Activated CD4-positive, alpha-beta memory T cell treated with anti-CD3 and anti-CD28 coated beads for 36 hours (primary cell): ENCODE measurements at regions of chr16 and their contacts with region 1.

Region 1: GRCh38 chr16:12754824-12755543 is 48.7 kb downstream of the CPPED1 start:
- DNase-seq: no peak
- H3K4me3 Mint-ChIP-seq: no peak overlapping the region
- H3K27ac Mint-ChIP-seq: no peak overlapping the region
- H3K4me1 Mint-ChIP-seq: peaks cover 33% of the 10 kb centered on the region
- H3K27me3 Mint-ChIP-seq: no peaks in the 10 kb centered on the region

Region 2: DNA sequence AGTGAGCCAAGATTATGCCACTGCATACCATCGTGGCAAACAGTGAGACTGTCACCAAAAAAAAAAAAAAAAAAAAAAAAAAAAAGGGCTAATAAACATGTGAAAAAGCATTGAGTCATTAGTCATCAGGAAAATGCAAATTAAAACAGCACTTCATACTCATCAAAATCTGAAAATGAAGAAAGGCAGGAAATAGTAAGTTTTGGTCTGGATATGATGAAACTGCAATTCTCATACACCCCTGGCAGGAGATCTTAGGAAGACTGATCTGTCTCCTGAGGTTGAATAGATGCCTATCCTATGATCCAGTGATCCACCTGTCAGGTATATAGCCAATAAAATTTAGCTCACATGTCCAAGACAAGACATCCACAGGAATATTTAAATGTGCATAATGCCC is 164.0 kb before region 1 on chr16:
- CTCF ChIA-PET with region 1: no interaction called
- POLR2A ChIA-PET with region 1: no interaction called
- intact Hi-C with region 1: loop called (anchors 1 kb)
- DNase-seq: no peak
- H3K4me3 Mint-ChIP-seq: no peak overlapping the region
- H3K27ac Mint-ChIP-seq: no peak overlapping the region
- H3K4me1 Mint-ChIP-seq: peaks cover 14% of the 10 kb centered on the region
- H3K27me3 Mint-ChIP-seq: peaks cover 17% of the 10 kb centered on the region

Region 3: GRCh38 chr16:12602811-12603698 is 151.9 kb before region 1 on chr16:
- CTCF ChIA-PET with region 1: no interaction called
- POLR2A ChIA-PET with region 1: no interaction called
- intact Hi-C with region 1: no loop called
- DNase-seq: no peak
- H3K4me3 Mint-ChIP-seq: no peak overlapping the region
- H3K27ac Mint-ChIP-seq: no peak overlapping the region
- H3K4me1 Mint-ChIP-seq: no peaks in the 10 kb centered on the region
- H3K27me3 Mint-ChIP-seq: peaks cover 11% of the 10 kb centered on the region

Region 4: GRCh38 chr16:12646490-12647274 is 108.3 kb before region 1 on chr16:
- CTCF ChIA-PET with region 1: no interaction called
- POLR2A ChIA-PET with region 1: interaction called, 3 read pairs
- intact Hi-C with region 1: loop called (anchors 2 kb)
- DNase-seq: peak; percentile 44
- H3K4me3 Mint-ChIP-seq: peak overlapping the region; percentile 42
- H3K27ac Mint-ChIP-seq: peak overlapping the region; percentile 75
- H3K4me1 Mint-ChIP-seq: peaks cover 16% of the 10 kb centered on the region
- H3K27me3 Mint-ChIP-seq: peaks cover 1% of the 10 kb centered on the region

Region 5: DNA sequence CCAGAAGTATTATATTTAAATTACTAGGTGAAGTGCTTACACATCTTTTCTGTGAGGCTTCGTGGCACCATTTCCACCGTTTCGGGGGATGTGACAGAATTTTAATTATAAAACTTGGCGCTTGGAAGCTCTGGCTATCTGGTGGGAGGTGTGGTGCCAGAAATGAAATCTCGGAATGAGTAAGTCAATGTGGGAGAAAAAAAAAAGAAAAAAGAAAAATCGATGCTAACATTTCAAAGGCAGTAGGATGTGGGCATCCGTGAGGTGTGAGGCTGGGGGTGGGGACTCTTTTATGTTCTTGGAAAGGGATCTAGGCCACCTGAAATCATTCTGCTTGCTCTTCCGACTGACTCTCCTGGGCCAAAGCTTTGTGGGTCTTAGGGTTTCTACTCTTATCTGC is 26.8 kb after region 1 on chr16:
- CTCF ChIA-PET with region 1: no interaction called
- POLR2A ChIA-PET with region 1: interaction called, 3 read pairs
- intact Hi-C with region 1: loop called (anchors 1 kb)
- DNase-seq: peak; percentile 73
- H3K4me3 Mint-ChIP-seq: no peak overlapping the region
- H3K27ac Mint-ChIP-seq: peak overlapping the region; percentile 64
- H3K4me1 Mint-ChIP-seq: peaks cover 9% of the 10 kb centered on the region
- H3K27me3 Mint-ChIP-seq: no peaks in the 10 kb centered on the region

Region 6: GRCh38 chr16:12819126-12820117 is 64.4 kb after region 1 on chr16:
- CTCF ChIA-PET with region 1: no interaction called
- POLR2A ChIA-PET with region 1: no interaction called
- intact Hi-C with region 1: loop called (anchors 5 kb)
- DNase-seq: peak; percentile 88
- H3K4me3 Mint-ChIP-seq: no peak overlapping the region
- H3K27ac Mint-ChIP-seq: no peak overlapping the region
- H3K4me1 Mint-ChIP-seq: peaks cover 4% of the 10 kb centered on the region
- H3K27me3 Mint-ChIP-seq: no peaks in the 10 kb centered on the region

Region 7: DNA sequence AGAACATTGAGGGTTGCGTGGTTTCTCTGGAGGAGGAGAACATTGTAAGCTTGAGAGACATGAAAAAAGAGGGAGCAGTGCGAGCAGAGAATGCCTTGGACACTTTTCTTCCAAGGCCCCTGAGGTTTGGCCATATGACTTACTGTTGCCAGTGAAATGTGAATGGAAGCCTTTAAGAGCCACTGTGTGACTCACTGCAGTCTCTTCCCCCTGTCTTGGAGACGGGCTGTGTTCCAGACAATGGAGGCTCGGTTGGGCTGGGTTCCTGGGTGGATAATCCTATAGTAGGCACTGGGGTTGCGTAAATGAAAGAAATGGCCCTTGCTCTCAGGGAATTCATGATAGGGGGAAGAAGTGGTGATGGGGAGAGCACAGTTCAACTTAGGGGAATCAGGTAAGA is 222.0 kb after region 1 on chr16:
- CTCF ChIA-PET with region 1: no interaction called
- POLR2A ChIA-PET with region 1: no interaction called
- intact Hi-C with region 1: no loop called
- DNase-seq: no peak
- H3K4me3 Mint-ChIP-seq: no peak overlapping the region
- H3K27ac Mint-ChIP-seq: no peak overlapping the region
- H3K4me1 Mint-ChIP-seq: no peaks in the 10 kb centered on the region
- H3K27me3 Mint-ChIP-seq: no peaks in the 10 kb centered on the region